ENCODE measurements at regions of chr1 and their contacts with region 1.

Region 1: GRCh38 chr1:150072959-150073358 is 5.4 kb downstream of the VPS45 start:
- DNase-seq: no peak
- ATAC-seq: peak in 1 of 2 donors; percentile 51
- H3K4me3 ChIP-seq: no peak overlapping the region
- H3K27ac ChIP-seq: no peak overlapping the region
- H3K4me1 ChIP-seq: no peaks in the 10 kb centered on the region
- H3K27me3 ChIP-seq: no peaks in the 10 kb centered on the region

Region 2: GRCh38 chr1:150162862-150163706 is 90.1 kb after region 1 on chr1:
- intact Hi-C with region 1: loop called (anchors 2 to 10 kb)
- DNase-seq: peak; percentile 87 to 93 (median 91)
- ATAC-seq: peak; percentile 95
- H3K4me3 ChIP-seq: peak overlapping the region; percentile 37
- H3K27ac ChIP-seq: peak overlapping the region; percentile 99
- H3K4me1 ChIP-seq: peaks cover 16% of the 10 kb centered on the region
- H3K27me3 ChIP-seq: no peaks in the 10 kb centered on the region

Region 3: DNA sequence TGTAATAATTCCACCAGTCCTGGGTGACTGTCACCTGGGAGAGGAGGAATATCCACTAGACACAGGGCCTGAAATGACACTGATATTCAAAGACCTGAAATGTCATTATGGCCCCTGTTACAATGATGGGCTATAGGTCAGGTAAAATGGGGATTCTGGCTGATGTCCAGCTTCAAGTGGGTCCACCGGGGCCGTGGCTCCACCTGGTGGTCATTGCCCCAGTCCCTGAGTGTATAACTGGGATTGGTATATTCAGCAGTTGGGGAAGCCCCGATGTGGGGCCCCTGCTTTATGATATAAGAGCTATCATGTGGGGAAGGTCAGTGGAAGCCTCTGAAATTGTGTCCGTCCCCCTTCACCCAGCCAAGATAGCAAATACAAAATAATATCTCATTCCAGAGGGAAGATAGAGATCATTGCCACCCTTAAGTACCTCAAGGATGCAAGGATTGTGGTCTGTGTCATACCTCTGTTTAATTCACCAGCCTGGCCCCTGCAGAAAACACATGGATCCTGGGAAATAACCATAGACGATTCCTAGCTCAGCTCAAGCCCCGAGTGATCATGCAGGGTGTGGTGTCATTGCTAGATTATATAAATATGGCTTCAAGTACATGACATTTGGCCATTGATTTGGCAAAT is 96.1 kb after region 1 on chr1:
- intact Hi-C with region 1: loop called (anchors 2 to 10 kb)
- DNase-seq: peak; percentile 66 to 87 (median 84)
- ATAC-seq: peak; percentile 57 to 70
- H3K4me3 ChIP-seq: no peak overlapping the region
- H3K27ac ChIP-seq: no peak overlapping the region
- H3K4me1 ChIP-seq: peaks cover 3% of the 10 kb centered on the region
- H3K27me3 ChIP-seq: no peaks in the 10 kb centered on the region

Region 4: DNA sequence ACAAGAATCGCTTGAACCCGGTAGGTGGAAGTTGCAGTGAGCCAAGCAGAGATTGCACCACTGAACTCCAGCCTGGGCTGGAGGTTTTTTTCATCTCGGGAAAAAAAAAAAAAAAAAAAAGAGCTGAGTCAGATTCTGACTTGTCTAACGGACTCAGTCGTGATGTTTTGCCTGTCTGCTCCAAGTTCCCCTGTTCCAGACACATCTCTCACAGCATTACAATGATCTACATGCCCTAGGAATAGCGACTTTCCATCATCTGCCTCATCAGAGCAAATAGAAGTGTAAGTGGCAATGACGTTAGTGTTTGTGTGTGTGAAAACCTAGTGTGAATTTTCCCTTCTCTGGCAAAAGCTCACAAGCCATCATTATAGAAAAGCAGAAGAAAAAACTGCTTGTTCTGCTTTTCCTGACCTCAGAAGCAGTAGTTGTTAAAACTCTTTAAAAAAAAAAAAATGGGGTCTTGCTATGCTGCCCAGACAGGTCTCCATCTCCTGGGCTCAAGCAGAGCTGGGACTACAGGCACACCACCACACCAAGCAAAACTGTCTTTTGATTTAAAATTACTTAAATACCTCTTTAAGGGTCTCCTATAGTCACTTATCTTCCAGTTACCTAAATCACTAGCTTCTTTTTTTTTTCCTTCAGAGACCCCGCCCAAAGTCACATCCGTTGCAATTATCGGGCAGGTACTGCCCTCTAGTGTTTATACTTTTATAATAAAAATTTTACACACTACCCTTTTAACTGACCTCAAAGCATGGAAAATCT is 114.0 kb after region 1 on chr1:
- intact Hi-C with region 1: loop called in 1 of 4 experiments (anchors 5 kb)
- DNase-seq: peak in 1 of 3 donors; percentile 59
- ATAC-seq: peak; percentile 63 to 77
- H3K4me3 ChIP-seq: no peak overlapping the region
- H3K27ac ChIP-seq: no peak overlapping the region
- H3K4me1 ChIP-seq: no peaks in the 10 kb centered on the region
- H3K27me3 ChIP-seq: no peaks in the 10 kb centered on the region

Region 5: DNA sequence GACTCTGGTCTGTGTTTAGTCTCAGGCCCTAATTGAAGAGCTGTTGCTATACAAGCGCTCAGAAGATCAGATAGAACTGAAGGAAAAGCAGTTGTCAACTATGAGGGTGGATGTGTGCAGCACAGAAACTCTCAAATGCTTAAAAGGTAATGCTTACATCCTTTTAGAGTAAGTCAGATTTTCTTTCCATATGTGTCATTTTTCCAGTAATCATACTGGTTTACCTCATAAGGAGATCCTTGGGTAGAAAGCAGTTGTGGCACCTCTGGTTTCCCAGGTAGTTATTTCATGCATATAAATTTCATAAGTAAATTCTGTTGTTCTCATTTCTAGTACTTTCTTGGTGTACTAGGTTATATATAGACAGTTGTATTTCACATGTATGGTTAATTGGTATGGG is 371.3 kb after region 1 on chr1:
- intact Hi-C with region 1: no loop called
- DNase-seq: no peak
- ATAC-seq: no peak
- H3K4me3 ChIP-seq: no peak overlapping the region
- H3K27ac ChIP-seq: no peak overlapping the region
- H3K4me1 ChIP-seq: no peaks in the 10 kb centered on the region
- H3K27me3 ChIP-seq: no peaks in the 10 kb centered on the region

Measured in right cardiac atrium (tissue), 5 donors.